ENCODE measurements at regions of chr1 and their contacts with region 1.

Region 1: DNA sequence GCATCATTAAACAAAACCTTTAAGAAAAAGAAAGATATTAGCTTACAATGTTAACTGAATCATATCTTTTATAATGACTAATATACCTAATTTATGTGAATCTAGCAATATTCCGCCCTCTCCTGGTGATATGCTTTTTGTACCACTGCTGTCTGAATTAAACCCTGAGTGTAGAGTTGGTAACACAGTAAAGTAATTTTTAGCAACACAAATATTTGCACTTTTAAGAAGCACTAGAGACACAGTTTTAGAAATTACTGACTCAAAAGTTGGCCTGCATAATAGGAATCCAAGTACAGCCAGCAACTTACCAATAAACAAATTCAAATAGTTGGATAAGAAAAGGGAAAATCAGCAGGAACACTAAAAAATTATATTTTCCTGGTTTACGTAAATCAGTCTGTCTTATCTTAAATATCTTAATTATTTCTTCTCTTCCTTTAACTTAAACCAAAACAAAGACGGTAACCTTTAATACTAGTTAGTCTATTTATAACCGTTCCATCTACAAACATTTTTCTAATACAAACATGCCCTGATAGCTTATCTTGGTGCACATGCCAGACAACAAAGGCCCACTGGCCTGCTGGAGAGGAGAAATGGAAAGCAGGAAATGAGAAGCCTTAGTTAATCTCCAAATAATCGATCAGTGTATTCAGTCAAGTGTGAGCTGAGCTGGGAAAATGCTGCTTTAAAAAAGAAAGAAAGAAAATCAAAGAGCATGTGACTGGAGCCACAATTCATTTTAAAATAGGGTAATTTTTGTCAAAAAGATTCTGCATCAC is 246.0 kb downstream of the RERE start:
- DNase-seq: no peak

Region 2: GRCh38 chr1:8456308-8456912 is 115.0 kb before region 1 on chr1:
- CTCF ChIA-PET with region 1: no interaction called
- POLR2A ChIA-PET with region 1: no interaction called
- DNase-seq: no peak

Region 3: GRCh38 chr1:8687039-8687438 is 115.6 kb after region 1 on chr1:
- CTCF ChIA-PET with region 1: interaction called, 11 read pairs
- POLR2A ChIA-PET with region 1: no interaction called
- DNase-seq: no peak